Ovary (tissue), 10 donors: ENCODE measurements at regions of chr10 and their contacts with region 1.

Region 1: GRCh38 chr10:92573798-92574547 is at the start of gene IDE:
- DNase-seq: peak; percentile 81 to 89 (median 84)
- H3K4me3 ChIP-seq: peak within 1 kb of the TSS; percentile 84
- H3K27ac ChIP-seq: peak within 1 kb of the TSS; percentile 78 to 94
- H3K4me1 ChIP-seq: peaks cover 13% of the 10 kb centered on the region
- H3K27me3 ChIP-seq: no peaks in the 10 kb centered on the region
- CTCF ChIP-seq: peak; percentile 16 to 79 (median 69)
- EP300 ChIP-seq: no peak
- POLR2A ChIP-seq: peak; percentile 33
- total RNA-seq, gene IDE: 14.3 to 34.1 (median 28.2) TPM

Region 2: GRCh38 chr10:91955114-91955513 is 618.9 kb before region 1 on chr10:
- intact Hi-C with region 1: loop called in 1 of 4 experiments (anchors 5 kb)
- DNase-seq: no peak
- H3K4me3 ChIP-seq: no peak overlapping the region
- H3K27ac ChIP-seq: no peak overlapping the region
- H3K4me1 ChIP-seq: no peaks in the 10 kb centered on the region
- H3K27me3 ChIP-seq: no peaks in the 10 kb centered on the region
- CTCF ChIP-seq: no peak
- EP300 ChIP-seq: no peak
- POLR2A ChIP-seq: no peak

Region 3: GRCh38 chr10:92517034-92517655 is 56.8 kb before region 1 on chr10:
- intact Hi-C with region 1: loop called (anchors 2 to 5 kb)
- DNase-seq: peak in 4 of 5 donors; percentile 30 to 73 (median 54)
- H3K4me3 ChIP-seq: no peak overlapping the region
- H3K27ac ChIP-seq: no peak overlapping the region
- H3K4me1 ChIP-seq: no peaks in the 10 kb centered on the region
- H3K27me3 ChIP-seq: no peaks in the 10 kb centered on the region
- CTCF ChIP-seq: peak; percentile 61 to 66 (median 65)
- EP300 ChIP-seq: no peak
- POLR2A ChIP-seq: no peak

Region 4: GRCh38 chr10:92591550-92592022 is 17.6 kb after region 1 on chr10:
- intact Hi-C with region 1: loop called in 1 of 4 experiments (anchors 2 kb)
- DNase-seq: peak; percentile 89 to 93 (median 90)
- H3K4me3 ChIP-seq: peak overlapping the region; percentile 67
- H3K27ac ChIP-seq: peak overlapping the region; percentile 58 to 88
- H3K4me1 ChIP-seq: no peaks in the 10 kb centered on the region
- H3K27me3 ChIP-seq: no peaks in the 10 kb centered on the region
- CTCF ChIP-seq: no peak
- EP300 ChIP-seq: no peak
- POLR2A ChIP-seq: peak; percentile 79